K562 (cell line): ENCODE measurements at regions of chr2 and their contacts with region 1.

Region 1: GRCh38 chr2:168849610-168850009 is 40.6 kb downstream of the SPC25 start:
- DNase-seq: peak; percentile 47 to 66 (median 59)
- ATAC-seq: peak; percentile 44
- H3K4me3 ChIP-seq: no peak overlapping the region
- H3K27ac ChIP-seq: no peak overlapping the region
- H3K4me1 ChIP-seq: peaks cover 12 to 37% of the 10 kb centered on the region in 2 experiments
- H3K27me3 ChIP-seq: no peaks in the 10 kb centered on the region; a peak in 1 of 5 replicates
- CTCF ChIP-seq: peak; percentile 44 to 71 (median 52)
- EP300 ChIP-seq: 0 out of 2 replicates have a peak, but pooled peaks have one; percentile 11
- POLR2A ChIP-seq: no peak
- RAD21 ChIP-seq: peak; percentile 51 to 58

Region 2: GRCh38 chr2:168712049-168712448 is 137.6 kb before region 1 on chr2:
- CTCF ChIA-PET with region 1: no interaction called
- POLR2A ChIA-PET with region 1: no interaction called
- in situ Hi-C with region 1: no loop called
- intact Hi-C with region 1: loop called (anchors 5 kb)
- DNase-seq: peak in 3 of 4 experiments; percentile 13 to 56 (median 42)
- ATAC-seq: peak; percentile 94
- H3K4me3 ChIP-seq: no peak overlapping the region
- H3K27ac ChIP-seq: no peak overlapping the region
- H3K4me1 ChIP-seq: peaks cover 0 to 13% of the 10 kb centered on the region in 2 experiments; a peak in 3 of 5 replicates
- H3K27me3 ChIP-seq: no peaks in the 10 kb centered on the region
- CTCF ChIP-seq: peak; percentile 26 to 56 (median 43); a peak in 3 of 6 replicates
- EP300 ChIP-seq: no peak
- POLR2A ChIP-seq: no peak
- RAD21 ChIP-seq: peak; percentile 55 to 60

Region 3: GRCh38 chr2:168801961-168802858 is 47.4 kb before region 1 on chr2 and contains the start of gene NOSTRIN:
- CTCF ChIA-PET with region 1: no interaction called
- POLR2A ChIA-PET with region 1: interaction called, 5 read pairs
- in situ Hi-C with region 1: no loop called
- intact Hi-C with region 1: loop called (anchors 2 kb)
- DNase-seq: peak; percentile 51 to 87 (median 61)
- ATAC-seq: peak; percentile 68
- H3K4me3 ChIP-seq: peak within 1 kb of the TSS; percentile 38
- H3K27ac ChIP-seq: peak within 1 kb of the TSS; percentile 89
- H3K4me1 ChIP-seq: peaks cover 18 to 81% of the 10 kb centered on the region in 2 experiments
- H3K27me3 ChIP-seq: no peaks in the 10 kb centered on the region
- CTCF ChIP-seq: no peak; a peak in 1 of 6 replicates
- EP300 ChIP-seq: peak; percentile 45
- POLR2A ChIP-seq: peak; percentile 69
- RAD21 ChIP-seq: no peak; a peak in 1 of 4 replicates
- polyA plus RNA-seq, gene NOSTRIN: 51.9 to 82.9 TPM

Region 4: DNA sequence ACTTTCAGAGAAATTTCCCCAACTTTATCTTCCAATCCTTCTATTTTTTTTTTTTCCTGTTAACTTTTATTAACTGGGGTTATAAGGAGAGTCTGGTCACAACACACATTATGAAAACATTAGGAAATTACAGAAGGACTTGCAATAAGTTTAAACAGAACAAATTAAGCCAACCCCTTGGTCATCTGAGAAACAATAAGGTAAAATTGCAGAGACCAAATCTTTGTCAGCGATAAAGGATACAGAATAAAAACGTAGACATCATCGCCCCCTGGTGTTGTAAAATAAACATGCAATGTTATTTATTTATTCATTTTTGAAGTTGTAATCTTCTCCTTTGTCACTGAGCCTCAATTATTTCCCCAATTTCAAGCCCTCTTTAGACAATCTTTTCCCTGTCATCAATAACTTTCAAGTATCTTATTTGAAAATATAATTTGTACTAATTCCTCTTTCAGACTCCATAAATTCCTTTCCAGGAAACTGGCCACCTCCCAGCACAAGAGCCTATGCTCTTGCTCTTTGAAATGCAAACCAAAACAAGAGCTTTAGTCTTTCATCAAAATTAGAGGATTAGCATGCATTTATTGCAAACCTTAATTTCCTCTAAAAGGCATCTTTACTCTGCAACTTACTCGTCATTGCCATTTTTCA is 71.0 kb after region 1 on chr2:
- CTCF ChIA-PET with region 1: interaction called, 3 read pairs
- POLR2A ChIA-PET with region 1: no interaction called
- in situ Hi-C with region 1: no loop called
- intact Hi-C with region 1: loop called (anchors 2 kb)
- DNase-seq: peak; percentile 38 to 79 (median 44)
- ATAC-seq: peak; percentile 84
- H3K4me3 ChIP-seq: no peak overlapping the region
- H3K27ac ChIP-seq: no peak overlapping the region
- H3K4me1 ChIP-seq: peaks cover 0 to 7% of the 10 kb centered on the region in 2 experiments; a peak in 1 of 5 replicates
- H3K27me3 ChIP-seq: no peaks in the 10 kb centered on the region
- CTCF ChIP-seq: peak; percentile 63 to 90 (median 67); a peak in 5 of 6 replicates
- EP300 ChIP-seq: no peak
- POLR2A ChIP-seq: no peak
- RAD21 ChIP-seq: peak; percentile 95 to 98

Region 5: GRCh38 chr2:168935810-168936581 is 86.4 kb after region 1 on chr2:
- CTCF ChIA-PET with region 1: no interaction called
- POLR2A ChIA-PET with region 1: no interaction called
- in situ Hi-C with region 1: no loop called
- intact Hi-C with region 1: loop called (anchors 5 kb)
- DNase-seq: peak; percentile 76 to 96 (median 85)
- ATAC-seq: peak; percentile 91
- H3K4me3 ChIP-seq: peak overlapping the region; percentile 1; the same call in 1 of the 2 replicates
- H3K27ac ChIP-seq: peak overlapping the region; percentile 78
- H3K4me1 ChIP-seq: peaks cover 5 to 53% of the 10 kb centered on the region in 2 experiments
- H3K27me3 ChIP-seq: no peaks in the 10 kb centered on the region
- CTCF ChIP-seq: peak in 1 of 3 experiments; percentile 8; a peak in 2 of 6 replicates
- EP300 ChIP-seq: peak; percentile 100
- POLR2A ChIP-seq: no peak
- RAD21 ChIP-seq: peak; percentile 34